WTC11 (cell line): ENCODE measurements at regions of chr1 and their contacts with region 1.

Region 1: DNA sequence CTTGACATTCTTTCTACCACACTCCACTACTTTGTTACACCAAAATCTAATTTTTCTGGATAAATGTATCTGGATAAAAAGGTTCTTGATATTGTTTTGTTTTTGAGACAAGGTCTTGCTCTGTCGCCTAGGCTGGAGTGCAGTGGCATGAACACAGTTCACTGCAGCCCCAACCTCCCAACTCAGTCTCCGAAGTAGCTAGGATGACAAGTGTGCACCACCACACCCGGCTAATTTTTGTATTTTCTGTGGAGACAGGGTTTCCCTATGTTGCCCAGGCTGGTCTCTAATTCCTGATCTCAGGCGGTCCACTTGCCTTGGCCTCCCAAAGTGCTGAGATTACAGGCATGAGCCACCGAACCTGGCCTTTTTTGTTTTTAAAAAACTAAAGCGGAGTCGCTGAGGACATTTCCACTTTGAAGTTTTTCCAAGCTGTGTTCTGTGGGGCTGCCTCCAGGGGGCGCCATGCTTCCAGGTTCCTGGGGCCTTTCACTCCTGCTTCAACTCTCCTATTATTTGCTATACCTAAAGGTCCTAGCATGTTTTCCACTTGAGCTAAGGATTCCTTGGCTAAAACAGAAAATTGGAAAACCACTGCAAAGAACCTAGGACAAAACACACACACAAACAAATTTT is 14.1 kb upstream of the NCMAP start:
- DNase-seq: peak; percentile 57
- ATAC-seq: no peak
- H3K4me3 Mint-ChIP-seq: no peak overlapping the region
- H3K27ac Mint-ChIP-seq: peak overlapping the region; percentile 57; the same call in 1 of the 2 replicates
- H3K4me1 Mint-ChIP-seq: peaks cover 26% of the 10 kb centered on the region
- H3K27me3 Mint-ChIP-seq: no peaks in the 10 kb centered on the region
- CTCF ChIP-seq: peak; percentile 92

Region 2: DNA sequence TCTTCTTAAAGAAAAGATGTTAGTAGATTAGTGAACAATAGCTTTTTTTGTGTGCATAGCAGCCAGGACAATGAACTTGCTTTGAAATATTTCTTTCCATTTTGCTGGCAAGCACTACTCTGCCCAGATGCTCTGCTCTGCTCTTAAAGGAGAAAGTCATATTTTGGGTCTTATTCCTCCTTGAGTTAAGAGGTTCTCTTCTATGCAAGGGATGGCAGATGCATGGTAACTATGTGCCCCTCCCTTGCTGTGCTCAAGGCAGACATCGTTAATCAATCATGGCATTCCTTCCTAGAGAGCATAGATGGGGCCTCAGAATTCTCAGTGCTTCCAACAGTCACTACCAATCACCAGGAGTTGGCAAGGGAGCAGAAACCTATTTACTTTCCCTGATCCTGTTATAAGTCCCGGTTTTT is 98.6 kb before region 1 on chr1:
- CTCF ChIA-PET with region 1: no interaction called
- POLR2A ChIA-PET with region 1: no interaction called
- DNase-seq: no peak
- ATAC-seq: peak; percentile 62
- H3K4me3 Mint-ChIP-seq: no peak overlapping the region
- H3K27ac Mint-ChIP-seq: no peak overlapping the region
- H3K4me1 Mint-ChIP-seq: peaks cover 6% of the 10 kb centered on the region
- H3K27me3 Mint-ChIP-seq: no peaks in the 10 kb centered on the region
- CTCF ChIP-seq: no peak

Region 3: DNA sequence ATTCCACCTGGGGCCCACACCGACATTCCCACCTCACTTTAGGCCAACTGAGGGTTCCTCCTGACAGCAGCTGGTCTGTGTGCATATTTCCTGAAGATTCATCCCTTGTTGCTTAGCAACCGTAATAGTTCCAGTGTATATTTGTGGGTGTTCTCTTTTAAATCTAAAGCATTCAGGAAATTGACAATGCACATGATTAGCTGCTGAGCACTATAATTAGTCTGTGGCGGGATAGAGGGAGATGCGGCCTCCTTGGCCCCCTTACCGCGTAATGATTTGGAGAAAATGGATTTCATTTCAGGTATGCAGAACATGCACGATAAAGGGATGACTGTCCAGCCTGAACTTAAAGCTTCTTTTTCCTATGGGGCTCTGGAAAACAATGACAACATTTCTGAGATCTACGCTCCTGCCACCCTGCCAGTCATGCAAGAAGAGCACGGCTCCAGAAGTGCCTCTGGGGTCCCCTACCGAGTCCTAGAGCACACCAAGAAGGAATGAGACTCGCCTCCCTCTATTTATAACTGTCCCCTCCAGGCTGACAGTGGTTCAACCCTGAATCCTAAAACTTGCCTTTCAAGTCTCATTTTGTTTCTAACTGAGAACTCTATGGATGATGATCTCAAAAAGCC is 73.0 kb before region 1 on chr1:
- CTCF ChIA-PET with region 1: no interaction called
- POLR2A ChIA-PET with region 1: no interaction called
- DNase-seq: no peak
- ATAC-seq: no peak
- H3K4me3 Mint-ChIP-seq: no peak overlapping the region
- H3K27ac Mint-ChIP-seq: 0 out of 2 replicates have a peak overlapping the region, but pooled peaks have one; percentile 27
- H3K4me1 Mint-ChIP-seq: peaks cover 50% of the 10 kb centered on the region
- H3K27me3 Mint-ChIP-seq: no peaks in the 10 kb centered on the region
- CTCF ChIP-seq: no peak

Region 4: GRCh38 chr1:24526940-24527542 is 14.8 kb before region 1 on chr1:
- CTCF ChIA-PET with region 1: interaction called, 17 read pairs
- POLR2A ChIA-PET with region 1: no interaction called
- DNase-seq: no peak
- ATAC-seq: peak; percentile 41; the same call in 1 of the 2 replicates
- H3K4me3 Mint-ChIP-seq: no peak overlapping the region
- H3K27ac Mint-ChIP-seq: no peak overlapping the region
- H3K4me1 Mint-ChIP-seq: no peaks in the 10 kb centered on the region
- H3K27me3 Mint-ChIP-seq: no peaks in the 10 kb centered on the region
- CTCF ChIP-seq: peak; percentile 42

Region 5: DNA sequence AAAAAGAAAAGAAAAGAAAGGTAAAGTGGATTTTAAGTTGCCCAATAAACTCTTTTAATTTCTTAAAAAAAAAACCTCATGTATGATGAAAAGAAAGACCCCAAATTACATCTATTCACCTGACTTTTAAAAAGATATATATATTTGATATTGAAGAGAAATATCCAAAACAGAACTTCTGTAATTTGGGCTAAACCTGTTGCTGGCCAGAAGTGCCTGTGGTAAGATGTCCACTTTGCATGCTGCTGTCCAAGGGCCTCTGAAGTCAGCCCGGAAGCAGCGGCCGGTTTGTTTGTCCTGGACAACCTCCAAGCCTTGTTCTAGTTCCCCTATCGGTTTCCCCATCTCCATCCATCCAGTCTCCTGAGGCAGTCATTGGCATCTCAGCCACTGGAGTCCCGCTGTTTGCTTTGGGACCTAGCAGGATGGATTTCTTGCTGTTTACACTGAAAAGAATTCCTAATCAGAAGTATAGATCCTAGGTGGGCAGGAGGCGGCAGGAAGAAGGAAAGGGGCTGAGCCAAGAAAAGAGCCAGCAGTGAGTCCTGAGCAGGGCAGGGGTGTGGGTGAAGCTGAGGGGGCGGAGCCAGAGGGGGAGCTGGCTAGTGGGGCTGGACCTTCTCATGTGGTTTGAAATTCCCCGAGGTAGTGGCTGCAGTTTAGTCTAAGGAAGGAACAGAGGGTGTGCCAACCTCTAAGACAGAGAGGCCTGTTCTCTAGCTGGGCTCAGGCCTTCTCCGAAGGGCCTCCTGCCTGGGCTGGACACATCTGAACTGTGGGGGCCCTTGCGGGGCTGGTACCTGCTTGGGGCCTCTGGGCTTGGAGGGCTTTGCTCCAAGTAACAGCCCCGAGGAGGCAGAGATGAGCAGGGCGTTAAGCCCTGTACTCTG is 17.3 kb after region 1 on chr1:
- CTCF ChIA-PET with region 1: interaction called, 13 read pairs
- POLR2A ChIA-PET with region 1: no interaction called
- DNase-seq: peak; percentile 68
- ATAC-seq: peak; percentile 90
- H3K4me3 Mint-ChIP-seq: no peak overlapping the region
- H3K27ac Mint-ChIP-seq: no peak overlapping the region
- H3K4me1 Mint-ChIP-seq: peaks cover 23% of the 10 kb centered on the region
- H3K27me3 Mint-ChIP-seq: peaks cover 34% of the 10 kb centered on the region
- CTCF ChIP-seq: no peak

Region 6: DNA sequence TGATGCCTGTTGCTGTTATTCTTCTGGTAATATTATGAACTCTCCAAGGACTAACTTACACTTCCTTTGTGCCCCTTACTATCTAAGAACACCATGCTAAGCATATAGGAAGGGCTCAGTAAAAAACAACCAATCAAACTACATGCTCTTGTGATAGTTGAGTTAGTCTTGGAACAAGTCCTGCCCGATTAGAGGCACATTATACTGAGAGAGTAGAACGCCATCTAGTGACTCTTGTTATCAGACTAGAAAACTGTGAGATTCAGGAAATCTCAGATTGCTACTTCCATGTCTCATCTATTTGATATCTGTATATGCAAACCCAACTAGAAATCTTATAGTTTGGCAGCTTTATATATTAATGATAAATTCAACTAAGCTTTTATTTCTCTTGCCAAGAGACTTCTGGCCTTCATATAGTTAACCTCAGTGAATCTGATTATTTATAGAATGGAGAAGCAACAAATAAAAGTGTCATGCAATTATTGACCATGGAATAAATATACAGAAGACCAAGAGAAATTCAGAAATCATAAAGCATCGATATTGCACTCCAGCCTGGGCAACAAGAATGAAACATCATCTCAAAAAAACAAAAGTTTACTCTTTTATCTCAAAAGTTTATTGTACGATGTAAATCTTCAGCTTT is 93.5 kb after region 1 on chr1:
- CTCF ChIA-PET with region 1: interaction called, 17 read pairs
- POLR2A ChIA-PET with region 1: no interaction called
- DNase-seq: no peak
- ATAC-seq: peak; percentile 97
- H3K4me3 Mint-ChIP-seq: no peak overlapping the region
- H3K27ac Mint-ChIP-seq: no peak overlapping the region
- H3K4me1 Mint-ChIP-seq: peaks cover 7% of the 10 kb centered on the region; the same call in 1 of the 2 replicates
- H3K27me3 Mint-ChIP-seq: peaks cover 4% of the 10 kb centered on the region
- CTCF ChIP-seq: no peak

Region 7: DNA sequence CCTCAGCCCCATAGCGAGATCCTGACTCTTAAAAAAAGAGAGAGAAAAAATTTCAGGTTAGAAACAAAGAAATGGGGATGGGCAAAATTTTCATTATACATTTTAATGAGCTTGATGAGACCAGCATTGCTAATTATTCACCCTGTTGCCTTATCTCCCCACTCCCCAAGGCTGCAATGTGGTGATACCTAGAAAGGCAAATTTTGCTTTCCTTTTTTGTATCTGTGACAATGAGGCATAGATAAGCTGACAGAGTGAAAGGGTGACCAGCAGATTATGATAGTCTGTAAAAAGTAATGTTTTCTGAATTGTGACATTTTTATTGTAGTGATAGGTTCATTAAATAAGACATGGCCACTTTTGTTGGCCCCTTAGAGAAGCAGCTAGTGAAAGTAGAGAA is 114.2 kb after region 1 on chr1:
- CTCF ChIA-PET with region 1: no interaction called
- POLR2A ChIA-PET with region 1: no interaction called
- DNase-seq: no peak
- ATAC-seq: no peak
- H3K4me3 Mint-ChIP-seq: no peak overlapping the region
- H3K27ac Mint-ChIP-seq: no peak overlapping the region
- H3K4me1 Mint-ChIP-seq: no peaks in the 10 kb centered on the region
- H3K27me3 Mint-ChIP-seq: no peaks in the 10 kb centered on the region
- CTCF ChIP-seq: no peak